Spleen (tissue), 13 donors: ENCODE measurements at regions of chr9 and their contacts with region 1.

Region 1: GRCh38 chr9:34591248-34591916 is 1.9 kb upstream of the CNTFR start:
- DNase-seq: peak; percentile 95
- H3K4me3 ChIP-seq: peak overlapping the region; percentile 27 to 72 (median 48)
- H3K27ac ChIP-seq: peak overlapping the region in 5 of 8 donors; percentile 55 to 72 (median 69)
- H3K4me1 ChIP-seq: peaks cover 22 to 62% (median 43%) of the 10 kb centered on the region in 6 donors
- H3K27me3 ChIP-seq: peaks cover 0 to 84% (median 63%) of the 10 kb centered on the region in 7 donors
- CTCF ChIP-seq: peak; percentile 77 to 98 (median 94)
- POLR2A ChIP-seq: no peak

Region 2: GRCh38 chr9:34332076-34332964 is 259.1 kb before region 1 on chr9:
- intact Hi-C with region 1: loop called (anchors 5 kb)
- DNase-seq: no peak
- H3K4me3 ChIP-seq: no peak overlapping the region
- H3K27ac ChIP-seq: no peak overlapping the region
- H3K4me1 ChIP-seq: peaks cover 7 to 47% (median 27%) of the 10 kb centered on the region in 6 donors
- H3K27me3 ChIP-seq: no peaks in the 10 kb centered on the region
- CTCF ChIP-seq: peak in 8 of 11 experiments; percentile 34 to 55 (median 44)
- POLR2A ChIP-seq: no peak

Region 3: GRCh38 chr9:34403554-34404380 is 187.6 kb before region 1 on chr9:
- intact Hi-C with region 1: loop called (anchors 10 kb)
- DNase-seq: peak; percentile 83
- H3K4me3 ChIP-seq: no peak overlapping the region
- H3K27ac ChIP-seq: no peak overlapping the region
- H3K4me1 ChIP-seq: no peaks in the 10 kb centered on the region
- H3K27me3 ChIP-seq: no peaks in the 10 kb centered on the region
- CTCF ChIP-seq: peak; percentile 85 to 97 (median 95)
- POLR2A ChIP-seq: no peak

Region 4: DNA sequence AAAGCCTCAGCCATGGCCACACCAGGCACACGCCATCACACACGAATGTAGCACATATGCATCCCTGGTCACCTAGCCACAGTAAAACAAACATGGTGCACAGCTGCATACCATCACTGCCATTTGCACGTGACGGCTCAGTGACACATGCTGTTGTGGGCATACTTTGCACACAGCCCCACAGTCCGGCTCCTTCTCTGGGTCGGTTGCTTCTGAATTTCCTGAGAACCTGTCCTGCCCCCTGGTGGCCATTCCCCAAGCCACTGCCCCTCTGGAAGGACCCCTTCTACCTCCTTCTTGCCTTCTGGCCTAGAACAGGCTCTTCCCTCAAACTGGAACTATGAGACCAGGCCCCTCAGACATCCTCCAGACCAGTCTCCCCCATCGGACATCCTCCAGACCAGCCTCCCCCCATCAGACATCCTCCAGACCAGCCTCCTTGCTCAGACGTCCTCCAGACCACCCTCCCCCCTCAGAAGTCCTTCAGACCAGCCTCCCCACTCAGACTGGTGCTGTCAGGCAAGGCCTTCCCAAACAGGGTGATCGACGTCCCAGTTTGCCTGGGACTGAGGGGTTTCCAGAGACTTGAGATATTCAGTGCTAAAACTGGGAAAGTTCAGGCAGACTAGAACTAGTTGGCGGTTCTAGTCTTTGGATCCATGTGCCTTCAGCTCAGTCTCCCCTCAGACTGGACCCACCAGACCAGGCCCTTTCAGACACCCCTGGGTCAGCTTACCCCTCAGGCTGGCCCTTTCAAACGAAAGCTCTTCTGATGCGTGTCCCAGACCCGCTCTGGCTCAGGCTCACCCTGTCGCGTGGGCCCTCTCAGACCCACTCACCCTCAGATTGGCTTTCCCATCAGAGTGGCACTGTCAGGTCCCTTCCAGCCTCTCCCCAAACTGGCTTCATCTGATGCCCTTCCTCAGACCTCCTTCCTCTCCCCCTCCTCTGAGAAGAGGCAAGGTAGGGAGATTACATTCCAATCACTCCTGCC is 44.3 kb before region 1 on chr9:
- intact Hi-C with region 1: loop called (anchors 5 kb)
- DNase-seq: peak; percentile 79
- H3K4me3 ChIP-seq: no peak overlapping the region
- H3K27ac ChIP-seq: peak overlapping the region in 1 of 8 donors; percentile 1
- H3K4me1 ChIP-seq: peaks cover 0 to 22% (median 0%) of the 10 kb centered on the region in 6 donors
- H3K27me3 ChIP-seq: peaks cover 0 to 29% (median 6%) of the 10 kb centered on the region in 7 donors
- CTCF ChIP-seq: peak; percentile 17 to 75 (median 57)
- POLR2A ChIP-seq: no peak